Prostate gland (tissue), 2 donors: ENCODE measurements at regions of chr4 and their contacts with region 1.

Region 1: GRCh38 chr4:176034499-176034898 is 31.1 kb upstream of the WDR17 start:
- DNase-seq: no peak
- H3K4me3 ChIP-seq: no peak overlapping the region
- H3K27ac ChIP-seq: no peak overlapping the region
- H3K4me1 ChIP-seq: no peaks in the 10 kb centered on the region
- H3K27me3 ChIP-seq: no peaks in the 10 kb centered on the region
- CTCF ChIP-seq: peak in 3 of 4 experiments; percentile 18 to 39 (median 37)
- POLR2A ChIP-seq: no peak

Region 2: DNA sequence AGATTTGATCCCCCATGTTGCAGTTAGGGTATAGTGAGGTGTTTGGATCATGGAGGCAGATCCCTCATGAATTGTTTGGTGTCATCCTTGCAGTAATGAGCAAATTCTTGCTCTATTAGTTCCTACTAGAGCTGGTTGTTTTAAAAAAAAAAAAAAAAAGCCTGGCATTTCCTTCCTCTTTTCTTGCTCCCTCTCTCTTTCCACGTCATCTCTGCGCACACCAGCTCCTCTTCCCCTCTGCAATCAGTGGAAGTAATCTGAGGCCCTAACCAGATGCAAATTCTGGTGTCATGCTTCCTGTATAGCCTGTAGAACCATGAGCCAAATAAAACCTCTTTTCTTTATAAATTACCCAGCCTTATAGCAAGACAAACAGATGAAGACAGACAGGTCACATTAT is 55.6 kb after region 1 on chr4:
- intact Hi-C with region 1: no loop called
- DNase-seq: no peak
- H3K4me3 ChIP-seq: no peak overlapping the region
- H3K27ac ChIP-seq: no peak overlapping the region
- H3K4me1 ChIP-seq: no peaks in the 10 kb centered on the region
- H3K27me3 ChIP-seq: no peaks in the 10 kb centered on the region
- CTCF ChIP-seq: no peak
- POLR2A ChIP-seq: no peak

Region 3: DNA sequence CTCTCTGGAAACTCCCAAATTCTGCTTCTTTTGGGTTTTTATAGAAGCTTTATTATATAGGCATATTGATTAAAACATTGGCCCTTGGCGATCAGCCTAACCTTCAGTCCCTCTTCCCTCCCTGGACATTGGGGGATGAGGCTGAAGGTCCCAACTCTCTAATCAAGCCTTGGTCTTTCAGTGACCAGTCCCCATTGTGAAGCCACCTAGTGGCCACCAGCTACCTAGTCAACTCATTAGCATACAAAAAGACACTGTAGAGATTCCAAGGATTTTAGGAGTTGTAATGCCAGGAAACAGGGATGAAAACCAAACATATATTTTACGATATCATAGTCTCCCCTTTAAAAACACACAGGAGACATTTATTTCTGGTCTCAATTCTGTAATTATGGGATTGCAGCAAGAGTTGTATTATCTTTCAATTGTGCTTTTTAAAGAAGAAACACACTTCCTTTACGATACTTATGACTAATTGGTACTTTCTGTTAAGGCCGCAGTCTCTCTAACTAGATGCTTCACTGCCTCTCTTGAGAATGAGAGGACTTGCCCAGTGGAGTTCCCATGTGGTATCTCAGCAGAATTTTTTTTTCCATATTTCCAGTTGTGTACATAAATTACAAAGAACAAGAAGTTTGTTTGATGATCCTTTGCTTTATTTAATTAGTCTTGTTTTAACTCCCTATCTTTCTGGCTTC is 89.4 kb after region 1 on chr4:
- intact Hi-C with region 1: loop called (anchors 10 kb)
- DNase-seq: no peak
- H3K4me3 ChIP-seq: no peak overlapping the region
- H3K27ac ChIP-seq: no peak overlapping the region
- H3K4me1 ChIP-seq: no peaks in the 10 kb centered on the region
- H3K27me3 ChIP-seq: no peaks in the 10 kb centered on the region
- CTCF ChIP-seq: peak in 3 of 4 experiments; percentile 9 to 21 (median 17)
- POLR2A ChIP-seq: no peak

Region 4: DNA sequence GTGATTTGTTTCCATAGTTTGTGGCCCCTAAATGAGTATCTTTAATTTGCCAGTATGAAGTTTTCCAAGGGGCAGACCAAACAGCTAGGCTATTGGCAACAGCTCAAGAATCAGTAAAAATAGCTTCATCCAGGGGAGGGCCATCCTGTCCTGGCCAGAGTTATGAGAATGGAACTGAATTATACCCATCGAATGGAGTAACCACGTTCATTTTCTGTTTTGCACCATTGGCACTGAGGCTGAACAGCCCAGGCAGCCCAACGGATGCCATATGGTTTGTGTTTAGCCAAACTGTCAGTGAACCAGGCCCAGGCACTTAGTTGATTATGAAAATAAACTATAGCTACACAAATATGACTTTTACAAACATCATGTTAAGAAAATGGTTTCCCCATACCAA is 252.2 kb after region 1 on chr4:
- intact Hi-C with region 1: loop called (anchors 10 kb)
- DNase-seq: no peak
- H3K4me3 ChIP-seq: no peak overlapping the region
- H3K27ac ChIP-seq: no peak overlapping the region
- H3K4me1 ChIP-seq: no peaks in the 10 kb centered on the region
- H3K27me3 ChIP-seq: no peaks in the 10 kb centered on the region
- CTCF ChIP-seq: no peak
- POLR2A ChIP-seq: no peak